ENCODE measurements at regions of chr2 and their contacts with region 1.

Region 1: GRCh38 chr2:65432227-65433190 is at the start of gene SPRED2:
- DNase-seq: peak; percentile 96 to 97
- H3K4me3 ChIP-seq: peak within 1 kb of the TSS; percentile 56 to 95 (median 86)
- H3K27ac ChIP-seq: peak within 1 kb of the TSS; percentile 93 to 97 (median 96)
- H3K4me1 ChIP-seq: peaks cover 21 to 32% of the 10 kb centered on the region in 2 donors
- H3K27me3 ChIP-seq: no peaks in the 10 kb centered on the region
- CTCF ChIP-seq: peak in 2 of 6 experiments; percentile 23 to 26
- POLR2A ChIP-seq: peak; percentile 6 to 78
- total RNA-seq, gene SPRED2: 18.8 to 44.0 (median 25.4) TPM

Region 2: GRCh38 chr2:65264821-65265670 is 167.5 kb before region 1 on chr2:
- intact Hi-C with region 1: loop called (anchors 10 kb)
- DNase-seq: no peak
- H3K4me3 ChIP-seq: no peak overlapping the region
- H3K27ac ChIP-seq: no peak overlapping the region
- H3K4me1 ChIP-seq: peaks cover 8 to 10% of the 10 kb centered on the region in 2 donors
- H3K27me3 ChIP-seq: no peaks in the 10 kb centered on the region
- CTCF ChIP-seq: peak; percentile 14 to 78 (median 62)
- POLR2A ChIP-seq: no peak

Region 3: DNA sequence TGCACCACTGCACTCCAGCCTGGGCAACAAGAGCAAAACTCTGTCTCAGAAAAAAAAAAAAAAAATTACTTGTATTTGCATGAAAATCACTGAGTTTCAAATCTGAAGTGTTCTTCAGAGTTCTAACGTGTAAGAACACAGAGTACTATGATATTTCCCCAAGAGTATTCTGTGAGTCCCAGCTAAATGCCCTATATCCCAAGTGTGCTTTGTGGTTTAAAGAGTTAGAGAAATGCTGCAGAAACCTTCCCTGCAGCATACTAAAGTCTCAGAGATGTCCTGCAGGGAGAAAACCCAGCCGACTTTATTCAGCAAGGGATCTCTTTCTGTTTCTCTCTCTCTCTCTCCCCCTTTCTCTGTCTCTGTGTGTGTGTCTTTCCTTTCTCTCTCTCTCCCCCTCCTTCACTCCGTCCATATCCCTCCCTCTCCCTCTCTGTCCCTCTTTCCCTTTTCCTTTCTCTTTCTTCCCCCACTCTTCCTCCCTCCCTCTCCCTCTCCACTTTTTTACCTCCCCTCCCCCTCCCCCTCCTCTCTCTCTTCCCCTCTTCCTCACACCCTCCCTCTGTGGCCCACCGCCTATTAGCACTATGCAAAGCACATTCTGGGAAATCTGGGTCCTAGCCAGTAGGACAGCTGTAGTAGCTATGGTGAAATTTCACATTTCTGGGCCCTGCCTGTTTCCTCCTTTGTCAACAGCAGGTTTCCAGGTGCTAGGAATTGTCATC is 150.7 kb before region 1 on chr2:
- intact Hi-C with region 1: no loop called
- DNase-seq: no peak
- H3K4me3 ChIP-seq: no peak overlapping the region
- H3K27ac ChIP-seq: no peak overlapping the region
- H3K4me1 ChIP-seq: peaks cover 12 to 23% of the 10 kb centered on the region in 2 donors
- H3K27me3 ChIP-seq: no peaks in the 10 kb centered on the region
- CTCF ChIP-seq: no peak
- POLR2A ChIP-seq: no peak

Region 4: GRCh38 chr2:65382776-65383357 is 49.6 kb before region 1 on chr2:
- intact Hi-C with region 1: loop called (anchors 10 kb)
- DNase-seq: peak; percentile 96 to 98
- H3K4me3 ChIP-seq: no peak overlapping the region
- H3K27ac ChIP-seq: peak overlapping the region; percentile 82 to 88 (median 87)
- H3K4me1 ChIP-seq: peaks cover 29 to 46% of the 10 kb centered on the region in 2 donors
- H3K27me3 ChIP-seq: no peaks in the 10 kb centered on the region
- CTCF ChIP-seq: peak in 3 of 6 experiments; percentile 22 to 44 (median 37)
- POLR2A ChIP-seq: peak in 1 of 2 donors; percentile 35

Region 5: GRCh38 chr2:65554765-65555591 is 122.5 kb after region 1 on chr2:
- intact Hi-C with region 1: loop called (anchors 10 kb)
- DNase-seq: no peak
- H3K4me3 ChIP-seq: no peak overlapping the region
- H3K27ac ChIP-seq: no peak overlapping the region
- H3K4me1 ChIP-seq: no peaks in the 10 kb centered on the region
- H3K27me3 ChIP-seq: no peaks in the 10 kb centered on the region
- CTCF ChIP-seq: no peak
- POLR2A ChIP-seq: no peak

Region 6: GRCh38 chr2:65604245-65604644 is 171.7 kb after region 1 on chr2:
- intact Hi-C with region 1: no loop called
- DNase-seq: no peak
- H3K4me3 ChIP-seq: no peak overlapping the region
- H3K27ac ChIP-seq: no peak overlapping the region
- H3K4me1 ChIP-seq: no peaks in the 10 kb centered on the region
- H3K27me3 ChIP-seq: no peaks in the 10 kb centered on the region
- CTCF ChIP-seq: no peak
- POLR2A ChIP-seq: no peak

Region 7: DNA sequence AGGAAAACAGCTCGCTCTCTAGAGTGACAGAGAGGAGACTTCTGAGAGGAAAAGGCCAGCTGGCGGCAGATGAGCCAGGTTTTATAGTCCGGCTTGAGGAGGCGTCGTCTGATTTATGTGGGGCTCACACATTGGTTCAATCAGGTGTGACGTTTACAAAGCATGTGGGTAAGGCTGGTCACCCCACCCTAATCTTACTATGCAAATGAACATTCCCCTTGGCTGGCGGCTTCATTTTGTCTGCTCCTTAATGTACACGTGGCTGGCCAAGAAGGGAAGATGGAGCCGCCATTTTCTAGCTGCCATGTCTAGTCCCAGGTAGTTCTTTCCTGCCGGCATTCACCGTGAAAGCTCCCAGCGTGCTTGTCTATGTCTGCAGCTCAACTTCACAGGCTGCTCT is 299.0 kb after region 1 on chr2:
- intact Hi-C with region 1: no loop called
- DNase-seq: no peak
- H3K4me3 ChIP-seq: no peak overlapping the region
- H3K27ac ChIP-seq: no peak overlapping the region
- H3K4me1 ChIP-seq: no peaks in the 10 kb centered on the region
- H3K27me3 ChIP-seq: no peaks in the 10 kb centered on the region
- CTCF ChIP-seq: no peak
- POLR2A ChIP-seq: no peak

Measured in thyroid gland (tissue), 4 donors.